CD4-positive, alpha-beta memory T cell (primary cell): ENCODE measurements at regions of chr11 and their contacts with region 1.

Region 1: DNA sequence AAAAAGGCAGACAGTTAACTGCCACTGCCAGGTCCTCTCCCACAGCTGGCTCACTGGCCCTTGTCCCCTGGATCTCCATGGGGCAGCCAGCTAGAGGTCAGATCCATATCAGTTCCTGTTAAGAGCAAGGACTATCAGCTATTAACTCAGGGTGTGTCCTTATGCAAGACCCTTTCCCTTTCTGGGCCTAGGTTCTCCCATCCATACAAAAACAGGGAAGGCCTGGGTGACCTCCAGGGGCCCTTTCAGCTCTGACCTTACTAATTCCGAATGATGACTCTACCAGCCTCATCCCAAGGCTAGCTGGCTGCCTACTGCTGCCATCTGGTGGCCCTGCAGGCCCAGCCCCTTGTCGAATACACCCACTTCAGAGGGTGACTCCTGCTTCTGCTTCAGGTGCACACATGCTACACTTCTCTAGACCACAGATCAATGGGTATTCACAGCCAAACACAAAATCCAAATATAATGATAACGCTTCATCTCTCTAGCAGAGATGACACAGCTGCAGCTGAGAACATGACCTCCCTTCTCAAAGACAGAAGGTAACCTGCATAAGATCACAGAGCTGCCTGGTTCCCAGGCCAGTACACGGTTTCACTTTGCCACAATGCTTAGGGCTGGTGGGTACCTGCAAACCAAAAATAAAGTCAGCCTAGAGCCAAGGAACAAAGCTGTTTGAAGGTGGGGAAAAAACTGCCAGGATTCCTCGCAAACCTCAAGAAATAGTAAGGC is 34.1 kb downstream of the SERGEF start:
- DNase-seq: no peak
- H3K4me3 ChIP-seq: no peak overlapping the region
- H3K4me3 Mint-ChIP-seq: no peak overlapping the region
- H3K27ac ChIP-seq: no peak overlapping the region
- H3K27ac Mint-ChIP-seq: no peak overlapping the region
- H3K4me1 ChIP-seq: no peaks in the 10 kb centered on the region
- H3K4me1 Mint-ChIP-seq: peaks cover 3 to 9% (median 3%) of the 10 kb centered on the region in 4 donors
- H3K27me3 ChIP-seq: no peaks in the 10 kb centered on the region
- H3K27me3 Mint-ChIP-seq: no peaks in the 10 kb centered on the region

Region 2: GRCh38 chr11:17730608-17731462 is 247.9 kb before region 1 on chr11:
- CTCF ChIA-PET with region 1: interaction called, 75 read pairs
- POLR2A ChIA-PET with region 1: no interaction called
- intact Hi-C with region 1: no loop called
- DNase-seq: peak; percentile 23 to 42 (median 32)
- H3K4me3 ChIP-seq: no peak overlapping the region
- H3K4me3 Mint-ChIP-seq: no peak overlapping the region
- H3K27ac ChIP-seq: no peak overlapping the region
- H3K27ac Mint-ChIP-seq: no peak overlapping the region
- H3K4me1 ChIP-seq: no peaks in the 10 kb centered on the region
- H3K4me1 Mint-ChIP-seq: peaks cover 0 to 8% (median 5%) of the 10 kb centered on the region in 4 donors
- H3K27me3 ChIP-seq: peaks cover 13% of the 10 kb centered on the region
- H3K27me3 Mint-ChIP-seq: peaks cover 29 to 39% of the 10 kb centered on the region in 2 donors

Region 3: GRCh38 chr11:17968206-17968605 is 10.5 kb before region 1 on chr11:
- CTCF ChIA-PET with region 1: interaction called, 13 read pairs
- POLR2A ChIA-PET with region 1: no interaction called
- intact Hi-C with region 1: no loop called
- DNase-seq: no peak
- H3K4me3 ChIP-seq: no peak overlapping the region
- H3K4me3 Mint-ChIP-seq: no peak overlapping the region
- H3K27ac ChIP-seq: no peak overlapping the region
- H3K27ac Mint-ChIP-seq: no peak overlapping the region
- H3K4me1 ChIP-seq: no peaks in the 10 kb centered on the region
- H3K4me1 Mint-ChIP-seq: peaks cover 0 to 5% (median under 1%) of the 10 kb centered on the region in 4 donors
- H3K27me3 ChIP-seq: no peaks in the 10 kb centered on the region
- H3K27me3 Mint-ChIP-seq: no peaks in the 10 kb centered on the region

Region 4: GRCh38 chr11:17991783-17992433 is 13.2 kb after region 1 on chr11:
- CTCF ChIA-PET with region 1: interaction called, 16 read pairs
- POLR2A ChIA-PET with region 1: no interaction called
- intact Hi-C with region 1: no loop called
- DNase-seq: peak; percentile 43 to 55 (median 47)
- H3K4me3 ChIP-seq: no peak overlapping the region
- H3K4me3 Mint-ChIP-seq: no peak overlapping the region
- H3K27ac ChIP-seq: no peak overlapping the region
- H3K27ac Mint-ChIP-seq: peak overlapping the region in 2 of 7 donors; percentile 60 to 65
- H3K4me1 ChIP-seq: no peaks in the 10 kb centered on the region
- H3K4me1 Mint-ChIP-seq: peaks cover 0 to 2% (median under 1%) of the 10 kb centered on the region in 4 donors
- H3K27me3 ChIP-seq: no peaks in the 10 kb centered on the region
- H3K27me3 Mint-ChIP-seq: no peaks in the 10 kb centered on the region